ENCODE measurements at regions of chr9 and their contacts with region 1.

Region 1: DNA sequence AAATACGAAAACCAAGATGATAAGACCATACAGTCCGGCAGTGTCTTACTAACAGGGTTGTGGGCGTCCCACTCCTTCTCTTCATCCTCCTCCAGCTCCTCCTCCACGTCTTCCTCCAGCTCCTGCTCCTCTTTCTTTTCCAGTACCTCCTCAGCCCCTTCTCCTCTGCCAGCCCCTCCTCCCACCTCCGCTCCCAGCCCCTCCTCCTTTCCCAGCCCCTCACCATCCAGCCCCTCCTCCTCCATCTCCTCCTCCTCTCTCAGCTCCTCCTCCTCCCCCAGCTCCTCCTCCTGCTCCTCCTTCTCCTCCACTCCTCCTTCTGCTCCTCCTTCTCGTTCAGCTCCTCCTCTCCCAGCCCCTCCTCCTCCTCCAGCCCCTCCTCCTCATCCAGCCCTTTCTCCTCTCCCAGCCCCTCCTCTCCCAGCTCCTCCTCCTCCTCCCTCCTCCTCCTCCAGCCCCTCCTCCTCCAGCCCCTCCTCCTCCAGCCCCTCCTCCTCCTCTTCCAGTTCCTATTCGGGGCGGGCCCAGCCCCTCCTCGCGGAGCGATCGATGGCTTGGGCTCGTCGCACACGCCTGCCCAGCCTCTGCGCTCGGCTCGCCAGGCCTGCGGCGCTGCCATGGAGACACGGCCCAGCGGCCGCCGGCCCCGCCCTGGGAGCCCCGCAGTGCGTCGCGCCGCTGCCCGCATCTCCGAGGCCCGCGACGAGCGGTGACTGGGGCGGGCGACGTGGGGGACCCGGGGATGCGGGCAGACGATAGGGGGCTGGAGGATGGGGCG is at the start of gene BRD3OS:
- DNase-seq: peak; percentile 92
- H3K4me3 Mint-ChIP-seq: peak within 1 kb of the TSS; percentile 79
- H3K27ac Mint-ChIP-seq: no peak within 1 kb of the TSS
- H3K4me1 Mint-ChIP-seq: no peaks in the 10 kb centered on the region
- H3K27me3 Mint-ChIP-seq: no peaks in the 10 kb centered on the region
- total RNA-seq, gene BRD3OS: 12.3 and 14.5 TPM in 2 replicates

Region 2: DNA sequence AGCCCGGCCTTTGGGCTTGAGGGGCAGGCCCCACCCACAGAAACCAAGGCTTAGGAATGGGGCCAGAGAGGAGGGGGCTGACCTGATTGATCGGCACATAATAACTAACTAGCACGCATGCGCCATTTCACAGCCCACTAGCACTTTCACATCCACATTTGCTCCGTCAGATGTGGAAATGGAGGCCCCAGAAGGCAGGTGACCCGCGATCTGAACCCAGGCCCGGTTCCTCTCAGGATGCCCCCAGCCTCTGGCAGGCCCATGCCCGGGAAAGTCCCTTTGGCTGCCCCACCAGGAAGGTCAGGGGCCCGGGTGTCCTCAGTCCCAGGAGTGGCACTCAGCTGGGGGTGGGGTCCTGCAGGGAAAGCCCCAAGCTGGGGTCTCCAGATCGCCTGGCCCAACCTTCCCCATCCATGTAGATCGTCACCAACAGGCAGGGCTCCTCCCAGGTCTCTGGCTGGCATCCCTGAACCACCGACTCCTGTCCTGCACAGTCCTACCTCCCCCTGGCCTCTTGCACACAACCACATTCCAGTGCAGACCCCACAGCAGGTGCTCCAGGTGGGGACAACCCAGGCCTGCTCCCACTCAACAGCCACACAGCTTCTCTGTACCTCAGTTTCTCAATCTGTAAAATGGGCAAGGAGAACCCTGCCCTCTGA is 79.6 kb before region 1 on chr9:
- intact Hi-C with region 1: no loop called
- DNase-seq: no peak
- H3K4me3 Mint-ChIP-seq: no peak overlapping the region
- H3K27ac Mint-ChIP-seq: no peak overlapping the region
- H3K4me1 Mint-ChIP-seq: no peaks in the 10 kb centered on the region
- H3K27me3 Mint-ChIP-seq: no peaks in the 10 kb centered on the region

Region 3: DNA sequence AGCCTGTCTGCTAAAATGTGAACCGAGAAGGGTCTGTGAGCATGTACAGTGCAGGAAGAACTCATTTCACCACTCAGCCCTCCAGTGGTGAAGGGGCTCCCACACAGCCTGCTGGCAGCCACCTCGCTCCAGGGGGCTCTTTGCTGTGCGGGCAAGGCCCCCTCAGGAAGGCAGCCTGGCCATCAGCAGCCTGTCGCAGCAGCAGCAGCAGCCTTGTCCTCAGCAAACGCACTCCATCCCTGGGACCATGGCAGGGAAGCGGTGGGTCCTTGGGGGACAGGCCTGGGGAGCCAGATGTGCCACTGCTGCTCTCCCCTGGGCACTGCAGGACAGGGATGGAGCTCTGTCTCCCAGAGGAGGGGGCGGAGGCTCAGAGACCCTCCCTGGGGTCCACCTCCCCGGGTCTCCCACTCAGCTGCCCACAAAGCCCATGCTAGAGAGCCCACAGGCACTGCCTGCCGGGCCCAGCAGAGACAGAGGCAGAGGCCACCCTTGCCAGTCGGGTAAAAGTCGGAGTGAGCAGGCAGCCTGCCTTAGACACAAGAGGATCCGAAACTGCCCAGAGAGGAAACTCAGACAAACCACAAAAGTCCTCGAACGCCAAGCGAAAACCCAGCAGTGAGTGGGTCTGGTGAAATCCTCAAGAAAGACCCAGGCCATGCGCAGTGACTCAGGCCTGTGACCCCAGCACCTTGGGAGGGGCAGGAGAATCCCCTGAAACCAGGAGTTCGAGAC is 34.8 kb after region 1 on chr9:
- intact Hi-C with region 1: no loop called
- DNase-seq: no peak
- H3K4me3 Mint-ChIP-seq: no peak overlapping the region
- H3K27ac Mint-ChIP-seq: peak overlapping the region; percentile 34
- H3K4me1 Mint-ChIP-seq: no peaks in the 10 kb centered on the region
- H3K27me3 Mint-ChIP-seq: no peaks in the 10 kb centered on the region

Region 4: DNA sequence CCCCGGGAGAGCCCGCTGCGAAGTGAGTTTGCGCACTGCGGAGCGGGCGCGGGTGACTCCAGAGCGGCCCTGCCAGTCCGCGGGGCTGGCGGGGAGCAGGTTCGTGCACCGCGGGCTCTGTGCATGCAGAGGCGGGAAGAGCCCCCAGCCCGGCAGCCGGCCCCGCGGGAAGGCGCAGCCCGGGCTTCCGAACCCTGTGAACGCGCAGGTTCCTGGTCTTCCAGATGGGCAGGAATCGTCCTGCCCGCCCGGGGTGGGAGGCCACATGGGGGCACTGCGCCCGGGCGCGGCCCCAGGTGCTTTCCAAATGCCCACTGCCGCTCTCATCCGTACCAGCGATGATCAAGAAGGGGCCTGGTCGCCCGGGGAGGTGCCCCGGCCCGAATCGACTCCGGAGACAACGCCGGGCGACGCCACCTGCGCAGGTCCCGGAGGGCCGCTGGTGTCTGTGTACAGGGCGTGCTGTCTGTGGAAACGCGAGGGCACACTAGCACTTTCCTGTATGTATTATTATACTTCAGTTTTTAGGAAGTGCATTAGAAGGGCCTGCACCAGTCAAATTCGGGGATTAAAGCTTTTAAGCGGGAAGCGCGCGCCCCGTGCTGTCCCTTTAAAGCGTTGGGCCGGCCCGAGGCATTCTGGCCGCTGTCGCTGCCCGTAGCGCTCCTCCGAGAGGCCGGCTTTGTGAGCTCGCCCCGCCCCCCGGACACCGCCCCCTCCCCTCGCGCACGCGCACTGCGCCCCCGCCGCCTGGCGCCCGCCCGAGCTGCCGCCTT is 110.5 kb after region 1 on chr9 and contains the start of gene WDR5:
- intact Hi-C with region 1: loop called (anchors 1 kb)
- DNase-seq: peak; percentile 84
- H3K4me3 Mint-ChIP-seq: peak within 1 kb of the TSS; percentile 96
- H3K27ac Mint-ChIP-seq: peak within 1 kb of the TSS; percentile 93
- H3K4me1 Mint-ChIP-seq: peaks cover 29% of the 10 kb centered on the region
- H3K27me3 Mint-ChIP-seq: no peaks in the 10 kb centered on the region
- total RNA-seq, gene WDR5: 65.0 and 71.3 TPM in 2 replicates

Region 5: GRCh38 chr9:134811673-134812342 is 786.8 kb after region 1 on chr9:
- intact Hi-C with region 1: no loop called
- DNase-seq: no peak
- H3K4me3 Mint-ChIP-seq: no peak overlapping the region
- H3K27ac Mint-ChIP-seq: no peak overlapping the region
- H3K4me1 Mint-ChIP-seq: no peaks in the 10 kb centered on the region
- H3K27me3 Mint-ChIP-seq: no peaks in the 10 kb centered on the region

Measured in activated T-helper 1 cell treated with anti-CD3 and anti-CD28 coated beads, Interleukin-12 subunit alpha, Interleukin-12 subunit beta, Interleukin-2, Interleukin-4 antibody, amounts not matched to agents 30 ng/mL and 10 ng/mL and 1 ng/mL, durations not matched to agents 14 hours and 24 hours and 36 hours (primary cell).